Posterior cingulate gyrus (tissue), 11 donors: ENCODE measurements at regions of chrX and their contacts with region 1.

Region 1: GRCh38 chrX:152641996-152642395 is 4.3 kb downstream of the GABRQ start:
- DNase-seq: peak in 5 of 10 donors; percentile 15 to 85 (median 44)

Region 2: DNA sequence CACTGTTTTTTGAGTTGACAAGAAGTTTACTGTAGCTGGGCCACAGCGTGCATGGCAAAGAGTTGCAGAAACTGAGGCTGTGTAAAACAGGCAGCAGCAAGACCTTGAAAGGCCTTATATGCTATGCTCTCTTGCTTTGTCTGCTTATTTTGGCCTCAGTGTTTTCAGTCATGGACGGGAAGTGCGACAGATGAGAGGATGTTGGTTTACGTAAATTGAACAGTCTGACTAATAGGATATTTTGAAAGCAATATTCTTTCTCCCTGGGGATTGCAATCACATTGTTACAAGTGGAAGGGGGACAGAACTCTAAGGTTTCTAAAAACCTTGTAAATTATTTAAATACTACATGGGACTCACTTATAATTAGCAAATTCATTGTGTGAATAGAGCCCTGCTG is 471.4 kb before region 1 on chrX:
- intact Hi-C with region 1: no loop called
- DNase-seq: no peak

Region 3: GRCh38 chrX:152299787-152300186 is 342.2 kb before region 1 on chrX:
- intact Hi-C with region 1: no loop called
- DNase-seq: no peak

Region 4: DNA sequence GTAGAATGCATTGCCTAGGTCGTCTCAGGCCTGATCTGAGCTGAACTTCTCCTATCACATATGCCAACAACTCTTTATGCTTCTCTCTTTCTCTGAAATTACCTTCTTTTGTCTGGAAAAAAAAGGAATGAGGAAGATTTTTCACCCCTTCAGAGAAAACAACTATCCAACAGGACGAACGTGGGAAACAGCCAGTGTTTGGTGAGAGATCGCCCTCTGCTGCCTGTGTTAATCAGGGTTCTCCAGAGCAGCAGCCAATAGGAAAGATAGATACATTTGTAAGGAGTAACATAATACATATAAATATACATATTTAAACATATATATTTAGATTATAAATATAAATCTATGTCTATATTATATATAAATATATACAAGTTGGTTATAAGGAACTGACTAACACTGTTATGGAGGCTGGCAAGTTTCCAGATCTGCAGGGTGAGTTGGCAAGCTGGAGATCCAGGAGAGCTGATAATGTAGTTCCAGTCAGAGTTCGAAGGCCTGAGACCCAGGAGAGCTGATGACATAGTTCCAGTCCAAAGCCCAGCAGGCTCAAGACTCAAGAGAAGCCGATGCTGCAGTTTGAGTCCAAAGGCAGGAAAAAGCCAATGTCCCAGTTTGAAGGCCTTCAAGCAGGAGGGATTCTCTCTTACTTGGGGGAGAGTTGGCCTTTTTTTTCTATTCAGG is 175.2 kb after region 1 on chrX:
- intact Hi-C with region 1: loop called (anchors 1 kb)
- DNase-seq: peak in 5 of 10 donors; percentile 20 to 54 (median 44)

Region 5: DNA sequence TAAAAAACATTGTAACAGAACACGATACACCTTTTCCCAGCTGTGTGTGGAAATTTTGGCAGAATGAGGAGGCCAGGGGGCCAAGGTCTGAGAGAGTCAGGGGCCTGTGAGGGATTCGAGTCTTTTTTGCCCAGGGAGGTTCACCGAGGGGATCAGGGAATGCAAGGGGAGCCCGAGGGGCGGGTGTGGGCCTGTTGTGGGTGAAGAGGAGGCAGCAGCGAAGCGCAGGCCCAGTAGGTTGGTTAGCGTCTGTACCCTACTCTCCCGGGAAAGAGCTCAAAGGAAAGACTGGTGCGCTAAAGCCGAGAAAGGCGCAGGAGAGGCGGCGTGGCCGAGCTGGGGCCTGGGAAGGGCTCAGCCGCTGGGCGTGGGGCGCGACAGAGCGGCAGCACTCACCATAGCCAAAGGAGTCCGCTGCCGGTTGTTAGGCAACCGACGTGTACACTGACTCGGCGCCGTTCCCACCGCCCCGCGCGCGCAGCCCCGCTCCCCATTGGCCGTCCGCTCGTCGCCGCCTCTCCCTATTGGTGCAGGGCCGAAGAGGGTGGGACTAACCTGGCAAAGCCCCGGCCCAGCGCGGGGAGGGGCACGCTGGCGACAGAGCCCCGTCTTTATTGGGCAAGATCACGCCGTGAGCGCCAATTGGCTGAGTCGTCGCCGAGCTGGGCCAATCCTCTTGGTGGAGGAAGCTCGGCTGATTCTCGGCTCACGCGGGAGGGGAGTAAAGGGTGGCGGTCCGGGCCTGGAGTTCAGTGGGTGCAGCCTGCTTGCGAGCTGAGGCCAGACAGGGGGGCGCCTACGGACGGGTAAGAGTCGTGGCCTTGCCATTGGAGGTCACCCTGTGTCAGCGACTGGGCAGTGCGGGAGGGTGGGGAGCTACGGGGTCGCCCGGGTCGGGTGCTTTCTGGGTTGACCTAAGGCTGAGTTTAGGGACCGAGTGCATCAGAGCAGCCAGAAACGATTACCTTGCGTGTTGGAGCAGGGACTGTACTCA is 188.6 kb after region 1 on chrX and contains the starts of genes CETN2 and NSDHL:
- intact Hi-C with region 1: loop called (anchors 5 kb)
- DNase-seq: peak; percentile 91 to 99 (median 96)

Region 6: DNA sequence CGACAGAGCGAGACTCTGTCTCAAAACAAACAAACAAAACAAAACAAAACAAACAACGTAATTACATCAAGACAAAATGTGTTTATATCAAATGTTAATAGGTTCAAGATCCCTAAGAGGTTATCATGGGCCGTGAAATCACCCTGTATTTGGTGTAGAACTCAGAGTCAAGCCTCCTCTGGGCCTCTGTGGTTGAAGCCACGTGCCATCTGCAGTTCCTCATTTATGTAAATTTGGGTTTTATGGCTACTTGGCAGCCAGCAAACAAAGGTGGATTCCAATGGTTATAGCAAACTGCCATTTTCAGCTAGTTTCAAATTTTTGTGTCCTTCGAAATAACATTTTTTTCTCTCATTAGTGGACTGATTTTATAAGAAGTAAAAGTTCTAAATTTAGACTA is 205.3 kb after region 1 on chrX:
- intact Hi-C with region 1: no loop called
- DNase-seq: no peak

Region 7: GRCh38 chrX:153370293-153371055 is 728.5 kb after region 1 on chrX:
- intact Hi-C with region 1: no loop called
- DNase-seq: no peak